Activated CD8-positive, alpha-beta T cell treated with anti-CD3 and anti-CD28 coated beads for 36 hours (primary cell): ENCODE measurements at regions of chr9 and their contacts with region 1.

Region 1: GRCh38 chr9:88593537-88594185 is 58.7 kb downstream of the NXNL2 start:
- DNase-seq: peak; percentile 78
- ATAC-seq: peak; percentile 73
- H3K4me3 Mint-ChIP-seq: no peak overlapping the region
- H3K27ac Mint-ChIP-seq: no peak overlapping the region
- H3K4me1 Mint-ChIP-seq: peaks cover 4% of the 10 kb centered on the region
- H3K27me3 Mint-ChIP-seq: peaks cover 21% of the 10 kb centered on the region
- CTCF ChIP-seq: peak; percentile 74

Region 2: DNA sequence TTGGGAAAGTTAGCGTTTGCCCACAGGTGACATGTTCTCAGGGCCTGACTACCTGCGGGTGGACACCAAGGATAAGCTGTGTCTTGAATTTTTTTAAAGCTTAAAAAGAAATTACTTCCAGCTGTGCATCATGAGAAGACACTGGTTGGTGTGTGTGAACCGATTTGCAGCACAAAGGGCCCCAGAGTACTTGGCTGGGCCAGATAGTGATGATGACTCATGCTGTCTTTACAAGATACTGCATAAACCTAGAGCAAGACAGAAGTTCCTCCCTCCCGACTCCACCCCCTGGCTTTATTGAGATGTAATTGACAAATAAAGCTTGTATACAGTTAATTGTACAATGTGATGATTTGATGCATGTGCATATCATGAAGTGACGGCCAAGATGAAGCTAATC is 154.1 kb after region 1 on chr9:
- CTCF ChIA-PET with region 1: no interaction called
- POLR2A ChIA-PET with region 1: no interaction called
- intact Hi-C with region 1: loop called (anchors 10 kb)
- DNase-seq: no peak
- ATAC-seq: no peak
- H3K4me3 Mint-ChIP-seq: no peak overlapping the region
- H3K27ac Mint-ChIP-seq: no peak overlapping the region
- H3K4me1 Mint-ChIP-seq: no peaks in the 10 kb centered on the region
- H3K27me3 Mint-ChIP-seq: peaks cover 7% of the 10 kb centered on the region
- CTCF ChIP-seq: no peak

Region 3: GRCh38 chr9:89000973-89001916 is 407.6 kb after region 1 on chr9:
- CTCF ChIA-PET with region 1: interaction called, 10 read pairs
- POLR2A ChIA-PET with region 1: no interaction called
- intact Hi-C with region 1: loop called (anchors 2 kb)
- DNase-seq: peak; percentile 90
- ATAC-seq: peak; percentile 80
- H3K4me3 Mint-ChIP-seq: no peak overlapping the region
- H3K27ac Mint-ChIP-seq: no peak overlapping the region
- H3K4me1 Mint-ChIP-seq: peaks cover 2% of the 10 kb centered on the region
- H3K27me3 Mint-ChIP-seq: peaks cover 16% of the 10 kb centered on the region
- CTCF ChIP-seq: peak; percentile 66